Breast epithelium (tissue), 4 donors: ENCODE measurements at regions of chr17 and their contacts with region 1.

Region 1: GRCh38 chr17:35119368-35120165 is at the start of gene RAD51D:
- DNase-seq: peak; percentile 42 to 70
- H3K4me3 ChIP-seq: peak within 1 kb of the TSS; percentile 72 to 83 (median 74)
- H3K27ac ChIP-seq: peak within 1 kb of the TSS; percentile 64 to 78
- H3K4me1 ChIP-seq: no peaks in the 10 kb centered on the region
- H3K27me3 ChIP-seq: no peaks in the 10 kb centered on the region
- CTCF ChIP-seq: peak; percentile 46 to 94 (median 61)
- POLR2A ChIP-seq: no peak
- total RNA-seq, gene RAD51D: 7.9 to 12.6 (median 10.5) TPM

Region 2: GRCh38 chr17:33888455-33888854 is 1231.1 kb before region 1 on chr17:
- intact Hi-C with region 1: no loop called
- DNase-seq: no peak
- H3K4me3 ChIP-seq: no peak overlapping the region
- H3K27ac ChIP-seq: no peak overlapping the region
- H3K4me1 ChIP-seq: no peaks in the 10 kb centered on the region
- H3K27me3 ChIP-seq: peaks cover 0 to 10% of the 10 kb centered on the region in 2 donors
- CTCF ChIP-seq: no peak
- POLR2A ChIP-seq: no peak

Region 3: DNA sequence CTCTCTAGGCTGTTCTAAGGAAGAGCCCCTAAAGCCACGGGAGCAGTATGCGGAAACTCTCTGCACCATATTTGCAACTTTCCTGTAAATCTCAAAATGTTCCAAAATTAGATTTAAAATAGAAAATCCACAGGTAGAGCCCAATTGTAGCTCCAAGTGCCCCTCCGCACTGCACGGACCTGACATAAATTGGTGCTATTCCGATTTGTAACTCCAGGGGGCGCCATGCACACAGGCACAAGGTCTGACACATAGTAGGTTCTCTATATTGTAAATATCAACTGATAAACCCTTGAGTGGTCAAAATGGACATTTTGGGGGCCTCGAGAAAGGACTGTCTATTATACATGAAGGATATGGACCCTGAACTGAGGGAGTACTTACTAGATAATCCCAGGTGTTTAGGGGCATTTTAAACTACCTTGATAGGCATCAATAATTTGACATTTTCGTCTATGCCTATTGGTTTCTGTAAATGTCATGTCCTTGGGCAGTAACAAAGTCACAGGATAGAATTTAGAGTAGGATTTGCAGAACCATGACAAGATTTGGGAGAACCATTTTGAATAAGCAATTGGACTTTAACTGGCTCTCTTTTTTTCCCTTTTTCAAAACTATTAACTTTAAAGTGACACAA is 576.7 kb before region 1 on chr17:
- intact Hi-C with region 1: loop called (anchors 10 kb)
- DNase-seq: no peak
- H3K4me3 ChIP-seq: no peak overlapping the region
- H3K27ac ChIP-seq: no peak overlapping the region
- H3K4me1 ChIP-seq: no peaks in the 10 kb centered on the region
- H3K27me3 ChIP-seq: peaks cover 0 to 10% of the 10 kb centered on the region in 2 donors
- CTCF ChIP-seq: peak; percentile 55 to 67 (median 64)
- POLR2A ChIP-seq: no peak

Region 4: DNA sequence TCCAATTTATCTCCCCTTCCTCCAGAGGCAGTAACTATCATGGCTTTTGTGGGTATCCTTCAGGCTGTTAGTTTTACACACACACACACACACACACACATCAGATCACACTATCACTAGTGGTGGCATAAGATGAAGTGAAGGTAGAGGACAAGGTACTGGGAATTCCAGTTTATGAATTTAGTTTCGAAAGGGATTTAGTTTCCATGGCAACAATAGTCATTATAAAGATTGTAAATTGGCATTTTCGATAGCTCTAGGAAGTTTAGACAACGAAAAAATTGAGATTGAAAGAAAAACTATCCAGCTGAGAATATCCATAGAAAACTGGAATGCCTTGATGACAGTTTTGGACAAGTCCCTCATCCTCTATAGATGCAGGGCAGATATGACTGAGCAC is 154.1 kb after region 1 on chr17:
- intact Hi-C with region 1: no loop called
- DNase-seq: no peak
- H3K4me3 ChIP-seq: no peak overlapping the region
- H3K27ac ChIP-seq: no peak overlapping the region
- H3K4me1 ChIP-seq: no peaks in the 10 kb centered on the region
- H3K27me3 ChIP-seq: no peaks in the 10 kb centered on the region
- CTCF ChIP-seq: no peak
- POLR2A ChIP-seq: no peak